ENCODE measurements at regions of chr19 and their contacts with region 1.

Region 1: DNA sequence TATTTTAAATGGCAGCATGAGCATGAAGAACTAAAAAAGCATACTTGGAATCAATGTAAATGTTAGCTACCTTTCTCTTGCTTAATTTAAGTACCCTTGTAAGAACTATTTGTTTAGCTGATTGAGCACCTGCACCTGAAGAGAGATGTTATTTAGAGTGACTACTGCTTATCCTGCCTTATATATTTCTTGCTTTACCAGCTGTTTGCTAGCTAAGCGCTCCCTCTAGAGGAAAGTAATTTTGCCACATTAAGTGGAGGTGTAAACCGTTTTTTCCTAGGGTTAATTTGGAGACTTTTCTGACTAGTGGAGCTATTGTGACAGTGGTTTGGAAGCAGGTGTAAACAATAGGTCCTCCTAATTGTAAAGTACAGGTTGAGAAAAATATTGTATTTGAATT is 19.4 kb upstream of the PSG2 start:
- DNase-seq: no peak
- H3K4me3 Mint-ChIP-seq: no peak overlapping the region
- H3K27ac Mint-ChIP-seq: no peak overlapping the region
- H3K4me1 Mint-ChIP-seq: peaks cover 12% of the 10 kb centered on the region
- H3K27me3 Mint-ChIP-seq: peaks cover 16% of the 10 kb centered on the region
- CTCF ChIP-seq: no peak

Region 2: GRCh38 chr19:43191191-43191590 is 89.2 kb after region 1 on chr19:
- CTCF ChIA-PET with region 1: interaction called, 6 read pairs
- intact Hi-C with region 1: loop called (anchors 5 kb)
- DNase-seq: no peak
- H3K4me3 Mint-ChIP-seq: no peak overlapping the region
- H3K27ac Mint-ChIP-seq: no peak overlapping the region
- H3K4me1 Mint-ChIP-seq: peaks cover 36% of the 10 kb centered on the region
- H3K27me3 Mint-ChIP-seq: no peaks in the 10 kb centered on the region
- CTCF ChIP-seq: no peak

Region 3: GRCh38 chr19:43207991-43208390 is 106.0 kb after region 1 on chr19:
- CTCF ChIA-PET with region 1: interaction called, 6 read pairs
- intact Hi-C with region 1: loop called (anchors 5 kb)
- DNase-seq: no peak
- H3K4me3 Mint-ChIP-seq: no peak overlapping the region
- H3K27ac Mint-ChIP-seq: no peak overlapping the region
- H3K4me1 Mint-ChIP-seq: peaks cover 53% of the 10 kb centered on the region
- H3K27me3 Mint-ChIP-seq: no peaks in the 10 kb centered on the region
- CTCF ChIP-seq: no peak

Region 4: DNA sequence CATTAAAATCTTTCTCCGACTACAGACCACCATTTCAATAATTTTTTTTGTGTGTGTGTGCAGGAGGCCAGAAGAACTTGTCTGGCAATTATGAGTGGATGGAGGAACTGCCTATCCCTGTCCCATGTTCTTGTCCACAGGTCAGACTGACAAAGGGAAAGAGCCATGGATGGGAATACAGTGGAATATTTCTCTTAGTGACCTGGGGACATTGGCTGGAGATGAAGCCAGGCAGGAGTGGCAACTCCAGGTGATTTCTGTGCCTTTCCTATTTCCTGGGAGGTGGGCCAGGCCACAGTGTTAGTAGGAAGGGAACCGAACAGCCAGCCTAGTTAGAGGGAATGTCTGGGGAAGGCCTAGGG is 163.7 kb after region 1 on chr19:
- CTCF ChIA-PET with region 1: no interaction called
- intact Hi-C with region 1: loop called (anchors 10 kb)
- DNase-seq: peak; percentile 22
- H3K4me3 Mint-ChIP-seq: peak overlapping the region; percentile 59
- H3K27ac Mint-ChIP-seq: peak overlapping the region; percentile 100
- H3K4me1 Mint-ChIP-seq: peaks cover 77% of the 10 kb centered on the region
- H3K27me3 Mint-ChIP-seq: no peaks in the 10 kb centered on the region
- CTCF ChIP-seq: no peak

Region 5: GRCh38 chr19:43305658-43306057 is 203.7 kb after region 1 on chr19:
- CTCF ChIA-PET with region 1: no interaction called
- intact Hi-C with region 1: no loop called
- DNase-seq: no peak
- H3K4me3 Mint-ChIP-seq: no peak overlapping the region
- H3K27ac Mint-ChIP-seq: no peak overlapping the region
- H3K4me1 Mint-ChIP-seq: no peaks in the 10 kb centered on the region
- H3K27me3 Mint-ChIP-seq: peaks cover 31% of the 10 kb centered on the region
- CTCF ChIP-seq: no peak

Measured in Calu3 (cell line).